Endothelial cell of umbilical vein (primary cell): ENCODE measurements at regions of chr19 and their contacts with region 1.

Region 1: GRCh38 chr19:50461066-50461875 is 15.0 kb upstream of the EMC10 start:
- DNase-seq: peak; percentile 68
- H3K4me3 ChIP-seq: no peak overlapping the region
- H3K27ac ChIP-seq: no peak overlapping the region
- H3K4me1 ChIP-seq: no peaks in the 10 kb centered on the region
- H3K27me3 ChIP-seq: no peaks in the 10 kb centered on the region
- CTCF ChIP-seq: peak; percentile 81 to 82
- POLR2A ChIP-seq: no peak

Region 2: DNA sequence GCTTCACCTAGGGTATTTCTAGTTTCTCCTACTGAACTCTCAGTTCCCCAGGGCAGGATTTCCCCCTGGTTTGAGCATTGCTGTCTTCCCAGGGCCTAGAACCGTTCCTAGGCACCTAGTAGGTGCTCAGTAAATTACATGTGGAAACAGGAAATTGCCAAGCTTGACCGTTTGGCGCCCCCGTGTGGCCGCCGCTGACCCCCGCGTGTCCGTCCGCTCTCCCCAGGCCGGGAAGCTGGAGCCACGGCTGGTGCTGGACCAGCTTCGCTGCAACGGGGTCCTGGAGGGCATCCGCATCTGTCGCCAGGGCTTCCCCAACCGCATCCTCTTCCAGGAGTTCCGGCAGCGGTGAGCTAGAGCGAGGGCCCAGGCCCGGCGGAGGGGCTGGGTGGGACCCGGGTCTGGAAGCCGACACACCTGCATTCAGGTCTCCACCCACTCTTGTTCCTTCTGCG is 202.3 kb before region 1 on chr19:
- CTCF ChIA-PET with region 1: no interaction called
- POLR2A ChIA-PET with region 1: no interaction called
- dilution Hi-C with region 1: no loop called
- intact Hi-C with region 1: no loop called
- DNase-seq: no peak
- H3K4me3 ChIP-seq: no peak overlapping the region
- H3K27ac ChIP-seq: no peak overlapping the region
- H3K4me1 ChIP-seq: no peaks in the 10 kb centered on the region
- H3K27me3 ChIP-seq: no peaks in the 10 kb centered on the region
- CTCF ChIP-seq: peak; percentile 54 to 61
- POLR2A ChIP-seq: no peak

Region 3: DNA sequence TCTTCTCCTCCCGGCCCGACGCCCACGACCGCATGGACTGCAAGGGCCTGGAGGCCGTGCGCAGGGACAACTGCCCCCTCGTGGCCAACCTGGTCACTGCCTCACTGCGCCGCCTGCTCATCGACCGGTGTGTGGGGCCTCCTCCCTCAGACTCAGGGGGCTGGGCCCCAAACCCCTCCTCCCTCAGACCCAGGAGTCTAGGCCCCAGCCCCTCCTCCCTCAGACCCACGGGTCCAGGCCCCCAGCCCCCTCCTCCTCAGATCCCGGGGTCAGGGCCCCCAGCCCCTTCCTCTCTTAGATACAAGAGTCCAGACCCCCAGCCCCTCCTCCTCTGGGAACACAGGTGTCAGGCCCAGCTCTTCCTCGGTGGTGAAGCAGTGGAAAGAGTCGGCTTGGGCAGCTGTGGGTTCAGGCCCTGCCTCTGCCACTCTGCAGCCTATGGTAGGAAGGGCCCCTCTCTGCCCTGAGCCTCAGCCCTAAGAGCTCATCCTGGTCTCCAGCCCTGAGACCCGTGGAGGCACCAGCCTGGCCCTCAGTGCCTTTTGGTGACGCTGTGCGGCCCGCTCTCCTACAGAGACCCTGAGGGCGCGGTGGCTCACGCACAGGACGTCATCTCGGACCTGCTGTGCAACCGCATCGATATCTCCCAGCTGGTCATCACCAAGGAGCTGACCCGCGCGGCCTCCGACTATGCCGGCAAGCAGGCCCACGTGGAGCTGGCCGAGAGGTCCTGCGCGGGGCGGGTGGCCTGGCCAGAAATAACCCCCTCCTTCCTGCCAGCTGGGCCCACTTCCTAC is 46.2 kb before region 1 on chr19:
- CTCF ChIA-PET with region 1: interaction called, 7 read pairs
- POLR2A ChIA-PET with region 1: interaction called, 5 read pairs
- dilution Hi-C with region 1: no loop called
- intact Hi-C with region 1: loop called (anchors 1 kb)
- DNase-seq: peak; percentile 60
- H3K4me3 ChIP-seq: no peak overlapping the region
- H3K27ac ChIP-seq: no peak overlapping the region
- H3K4me1 ChIP-seq: no peaks in the 10 kb centered on the region
- H3K27me3 ChIP-seq: peaks cover 15 to 18% of the 10 kb centered on the region in 2 experiments
- CTCF ChIP-seq: peak; percentile 87 to 98
- POLR2A ChIP-seq: no peak

Region 4: DNA sequence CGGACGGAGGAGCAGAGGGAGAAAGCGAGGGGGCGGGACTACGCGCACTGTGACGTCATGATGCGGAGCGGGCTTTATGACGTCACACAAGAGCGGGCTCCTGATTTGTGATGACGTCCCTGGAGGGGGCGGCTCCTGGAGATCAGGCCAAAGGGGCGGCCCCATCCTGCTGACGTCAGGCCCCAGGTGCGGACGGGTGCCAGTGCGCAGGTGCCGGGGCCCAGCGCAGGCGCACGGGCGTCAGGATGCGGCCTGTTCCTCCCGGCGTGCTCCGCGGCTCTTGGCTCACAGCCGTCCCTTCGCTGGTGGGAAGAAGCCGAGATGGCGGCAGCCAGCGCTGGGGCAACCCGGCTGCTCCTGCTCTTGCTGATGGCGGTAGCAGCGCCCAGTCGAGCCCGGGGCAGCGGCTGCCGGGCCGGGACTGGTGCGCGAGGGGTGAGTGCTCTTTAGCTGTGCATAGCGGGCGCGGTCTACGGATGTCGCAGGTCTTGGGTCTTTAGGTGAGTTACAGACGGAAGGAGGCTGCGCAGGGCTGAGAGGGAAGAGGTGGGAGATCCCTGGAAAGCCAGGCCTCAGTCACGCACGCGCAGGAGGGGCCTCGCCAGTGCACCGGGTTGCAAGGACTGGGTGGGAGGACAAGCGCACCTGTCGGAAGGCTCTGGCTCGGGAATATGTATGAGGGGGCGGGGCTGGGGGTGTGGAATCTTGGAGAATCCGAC is 15.1 kb after region 1 on chr19 and contains the starts of genes EMC10 and GARIN5A:
- CTCF ChIA-PET with region 1: interaction called, 12 read pairs
- POLR2A ChIA-PET with region 1: no interaction called
- dilution Hi-C with region 1: no loop called
- intact Hi-C with region 1: loop called (anchors 2 kb)
- DNase-seq: peak; percentile 94
- H3K4me3 ChIP-seq: peak within 1 kb of the TSS; percentile 84 to 98 (median 87)
- H3K27ac ChIP-seq: peak within 1 kb of the TSS; percentile 48
- H3K4me1 ChIP-seq: peaks cover 7% of the 10 kb centered on the region
- H3K27me3 ChIP-seq: no peaks in the 10 kb centered on the region
- CTCF ChIP-seq: no peak
- POLR2A ChIP-seq: peak; percentile 96
- total RNA-seq, gene EMC10: 101 and 106 TPM in 2 replicates
- total RNA-seq, gene GARIN5A: 0.44 and 0.62 TPM in 2 replicates